Tibial artery (tissue), 4 donors: ENCODE measurements at regions of chr4 and their contacts with region 1.

Region 1: GRCh38 chr4:156614536-156614935 is 357.1 kb downstream of the PDGFC start:
- DNase-seq: no peak
- H3K4me3 ChIP-seq: no peak overlapping the region
- H3K27ac ChIP-seq: no peak overlapping the region
- H3K4me1 ChIP-seq: peaks cover 0 to 14% (median 9%) of the 10 kb centered on the region in 4 donors
- H3K27me3 ChIP-seq: no peaks in the 10 kb centered on the region
- CTCF ChIP-seq: no peak

Region 2: DNA sequence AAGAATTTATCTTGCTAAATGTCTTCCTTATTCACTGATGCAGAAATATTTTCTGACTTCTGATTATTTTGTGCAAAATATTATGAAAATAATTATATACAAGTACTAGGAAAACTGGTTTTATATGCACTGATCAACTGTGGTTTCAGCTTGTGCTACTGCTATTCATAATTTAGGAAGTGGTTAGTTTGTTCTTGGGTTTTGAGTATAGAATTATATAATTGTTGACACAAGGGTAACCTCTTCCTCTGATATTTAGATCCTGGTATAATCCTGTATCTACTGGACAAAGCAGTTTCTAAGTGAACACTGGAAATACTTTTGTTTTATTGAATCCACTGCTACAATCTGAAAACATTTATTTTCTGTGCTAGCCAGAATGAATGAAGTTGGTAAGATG is 174.2 kb after region 1 on chr4:
- intact Hi-C with region 1: loop called (anchors 5 kb)
- DNase-seq: no peak
- H3K4me3 ChIP-seq: no peak overlapping the region
- H3K27ac ChIP-seq: no peak overlapping the region
- H3K4me1 ChIP-seq: peaks cover 0 to 9% (median 2%) of the 10 kb centered on the region in 4 donors
- H3K27me3 ChIP-seq: no peaks in the 10 kb centered on the region
- CTCF ChIP-seq: no peak